Adrenal gland (tissue), 19 donors: ENCODE measurements at regions of chr6 and their contacts with region 1.

Region 1: GRCh38 chr6:32432050-32432450 is 7.6 kb upstream of the HLA-DRA start:
- DNase-seq: no peak
- H3K4me3 ChIP-seq: no peak overlapping the region
- H3K27ac ChIP-seq: no peak overlapping the region
- H3K4me1 ChIP-seq: no peaks in the 10 kb centered on the region
- H3K27me3 ChIP-seq: peaks cover 3% of the 10 kb centered on the region
- CTCF ChIP-seq: peak; percentile 21 to 78 (median 66)
- POLR2A ChIP-seq: no peak

Region 2: DNA sequence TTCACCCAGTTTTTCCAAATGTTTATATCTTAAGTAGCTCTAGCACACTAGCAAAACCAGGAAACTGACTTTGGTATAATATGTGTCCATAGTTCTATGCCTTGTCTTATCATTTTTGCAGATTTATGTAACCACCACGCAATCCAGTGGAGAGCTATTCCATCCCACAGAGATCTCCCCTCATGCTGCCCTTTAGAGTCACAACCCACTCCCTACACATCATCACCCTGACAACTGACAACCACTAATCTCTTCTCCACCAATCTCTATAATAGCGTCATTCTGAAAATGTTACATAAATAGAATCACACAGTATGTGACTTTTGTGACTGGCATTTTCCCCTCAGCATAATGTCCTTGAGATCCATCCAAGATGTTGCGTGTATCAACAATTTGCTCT is 69.0 kb after region 1 on chr6:
- intact Hi-C with region 1: no loop called
- DNase-seq: no peak
- H3K4me3 ChIP-seq: no peak overlapping the region
- H3K27ac ChIP-seq: peak overlapping the region in 1 of 5 donors; percentile 13
- H3K4me1 ChIP-seq: no peaks in the 10 kb centered on the region
- H3K27me3 ChIP-seq: no peaks in the 10 kb centered on the region
- CTCF ChIP-seq: no peak
- POLR2A ChIP-seq: no peak

Region 3: DNA sequence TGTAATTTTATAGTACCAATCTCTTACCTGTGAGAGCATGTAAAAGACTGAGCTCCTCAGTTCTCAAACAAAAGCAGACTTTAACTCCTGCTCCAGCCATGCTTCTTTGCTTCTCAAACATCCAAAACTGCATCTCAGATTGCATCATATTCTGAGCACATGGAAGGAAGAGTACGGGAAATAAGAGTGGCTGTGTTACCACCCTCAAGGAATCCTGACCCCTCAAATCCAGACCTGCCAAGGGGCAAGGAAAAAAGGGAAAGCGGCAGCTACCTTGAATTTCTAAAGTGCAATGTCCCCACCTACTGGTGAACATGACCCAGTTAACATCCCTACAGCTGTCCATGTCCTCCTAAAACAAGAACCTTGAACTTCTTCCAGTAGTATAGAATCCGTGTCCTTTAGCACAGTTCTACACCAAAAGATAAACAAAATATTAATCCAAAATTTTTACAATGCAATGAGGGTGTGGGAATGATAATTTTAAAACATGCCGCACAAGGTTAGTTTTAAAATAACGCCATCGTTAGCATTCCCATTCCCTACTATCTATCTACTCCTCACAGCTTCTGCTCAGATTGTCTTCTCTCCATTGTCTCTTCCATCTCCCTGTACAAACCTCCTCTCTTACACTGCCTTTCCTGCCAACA is 268.5 kb after region 1 on chr6:
- intact Hi-C with region 1: loop called (anchors 5 kb)
- DNase-seq: peak; percentile 32 to 58 (median 49)
- H3K4me3 ChIP-seq: no peak overlapping the region
- H3K27ac ChIP-seq: no peak overlapping the region
- H3K4me1 ChIP-seq: no peaks in the 10 kb centered on the region
- H3K27me3 ChIP-seq: no peaks in the 10 kb centered on the region
- CTCF ChIP-seq: peak in 5 of 6 experiments; percentile 70 to 77 (median 73)
- POLR2A ChIP-seq: no peak